ENCODE measurements at regions of chrX and their contacts with region 1.

Region 1: DNA sequence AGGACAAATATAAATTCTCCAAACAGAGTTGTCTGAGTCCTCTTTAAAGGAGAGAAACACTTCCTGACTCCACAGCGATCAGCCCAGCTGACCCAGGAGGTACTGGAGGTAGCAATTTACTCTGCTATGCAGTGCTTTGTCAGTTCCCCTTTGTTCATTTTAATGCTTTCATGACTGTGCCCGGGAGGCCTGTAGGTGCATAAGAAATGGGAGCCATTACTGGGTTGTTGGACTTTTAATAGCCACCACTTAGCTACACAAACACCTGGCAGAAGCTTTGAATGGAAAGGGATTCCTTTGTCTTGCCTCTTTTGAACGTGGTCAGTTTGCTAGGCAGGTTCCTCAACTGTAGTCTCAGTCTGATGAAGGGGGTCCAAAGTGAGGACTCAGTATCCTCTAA is 59.0 kb upstream of the AFF2 start:
- DNase-seq: no peak
- H3K4me3 ChIP-seq: no peak overlapping the region
- H3K27ac ChIP-seq: no peak overlapping the region
- H3K4me1 ChIP-seq: no peaks in the 10 kb centered on the region
- H3K27me3 ChIP-seq: peaks cover 0 to 8% of the 10 kb centered on the region in 2 donors
- CTCF ChIP-seq: no peak
- POLR2A ChIP-seq: no peak

Region 2: DNA sequence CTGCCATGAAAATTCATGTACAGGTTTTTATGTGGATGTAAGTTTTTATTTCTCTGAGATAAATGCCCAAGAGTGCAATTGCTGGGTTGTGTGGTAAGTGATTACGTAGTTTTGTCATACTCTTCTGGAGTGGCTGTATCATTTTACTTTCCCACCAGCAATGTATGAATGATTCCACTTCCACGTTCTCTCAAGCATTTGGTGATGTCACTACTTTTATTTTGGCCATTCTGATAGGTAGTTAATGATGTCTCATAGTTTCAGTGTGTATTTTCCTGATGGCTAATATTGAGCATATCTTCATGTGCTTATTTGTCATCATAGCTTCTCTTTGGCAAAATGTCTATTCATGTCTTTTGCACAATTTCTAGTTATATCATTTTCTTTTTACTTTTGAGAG is 332.3 kb before region 1 on chrX:
- intact Hi-C with region 1: no loop called
- DNase-seq: no peak
- H3K4me3 ChIP-seq: no peak overlapping the region
- H3K27ac ChIP-seq: no peak overlapping the region
- H3K4me1 ChIP-seq: no peaks in the 10 kb centered on the region
- H3K27me3 ChIP-seq: peaks cover 0 to 15% of the 10 kb centered on the region in 2 donors
- CTCF ChIP-seq: no peak
- POLR2A ChIP-seq: no peak

Region 3: GRCh38 chrX:148376342-148376741 is 65.0 kb before region 1 on chrX:
- intact Hi-C with region 1: loop called (anchors 2 kb)
- DNase-seq: no peak
- H3K4me3 ChIP-seq: no peak overlapping the region
- H3K27ac ChIP-seq: no peak overlapping the region
- H3K4me1 ChIP-seq: no peaks in the 10 kb centered on the region
- H3K27me3 ChIP-seq: no peaks in the 10 kb centered on the region
- CTCF ChIP-seq: no peak
- POLR2A ChIP-seq: no peak

Region 4: GRCh38 chrX:148422531-148422930 is 18.9 kb before region 1 on chrX:
- intact Hi-C with region 1: no loop called
- DNase-seq: no peak
- H3K4me3 ChIP-seq: no peak overlapping the region
- H3K27ac ChIP-seq: no peak overlapping the region
- H3K4me1 ChIP-seq: no peaks in the 10 kb centered on the region
- H3K27me3 ChIP-seq: peaks cover 0 to 8% of the 10 kb centered on the region in 2 donors
- CTCF ChIP-seq: no peak
- POLR2A ChIP-seq: no peak